Caco-2 (cell line): ENCODE measurements at regions of chr13 and their contacts with region 1.

Region 1: GRCh38 chr13:73754727-73755292 is 379.4 kb downstream of the KLF12 start:
- DNase-seq: peak in 1 of 2 experiments; percentile 73
- H3K4me3 ChIP-seq: no peak overlapping the region
- H3K4me3 Mint-ChIP-seq: no peak overlapping the region
- H3K27ac Mint-ChIP-seq: peak overlapping the region; percentile 15
- H3K4me1 ChIP-seq: no peaks in the 10 kb centered on the region
- H3K4me1 Mint-ChIP-seq: no peaks in the 10 kb centered on the region
- H3K27me3 ChIP-seq: no peaks in the 10 kb centered on the region
- H3K27me3 Mint-ChIP-seq: no peaks in the 10 kb centered on the region
- CTCF ChIP-seq: peak; percentile 59 to 84

Region 2: GRCh38 chr13:73677048-73677601 is 77.7 kb before region 1 on chr13:
- CTCF ChIA-PET with region 1: no interaction called
- POLR2A ChIA-PET with region 1: no interaction called
- intact Hi-C with region 1: no loop called
- DNase-seq: peak in 1 of 2 experiments; percentile 77
- H3K4me3 ChIP-seq: no peak overlapping the region
- H3K4me3 Mint-ChIP-seq: no peak overlapping the region
- H3K27ac Mint-ChIP-seq: peak overlapping the region; percentile 69
- H3K4me1 ChIP-seq: peaks cover 53% of the 10 kb centered on the region
- H3K4me1 Mint-ChIP-seq: peaks cover 23% of the 10 kb centered on the region
- H3K27me3 ChIP-seq: no peaks in the 10 kb centered on the region
- H3K27me3 Mint-ChIP-seq: no peaks in the 10 kb centered on the region
- CTCF ChIP-seq: no peak

Region 3: DNA sequence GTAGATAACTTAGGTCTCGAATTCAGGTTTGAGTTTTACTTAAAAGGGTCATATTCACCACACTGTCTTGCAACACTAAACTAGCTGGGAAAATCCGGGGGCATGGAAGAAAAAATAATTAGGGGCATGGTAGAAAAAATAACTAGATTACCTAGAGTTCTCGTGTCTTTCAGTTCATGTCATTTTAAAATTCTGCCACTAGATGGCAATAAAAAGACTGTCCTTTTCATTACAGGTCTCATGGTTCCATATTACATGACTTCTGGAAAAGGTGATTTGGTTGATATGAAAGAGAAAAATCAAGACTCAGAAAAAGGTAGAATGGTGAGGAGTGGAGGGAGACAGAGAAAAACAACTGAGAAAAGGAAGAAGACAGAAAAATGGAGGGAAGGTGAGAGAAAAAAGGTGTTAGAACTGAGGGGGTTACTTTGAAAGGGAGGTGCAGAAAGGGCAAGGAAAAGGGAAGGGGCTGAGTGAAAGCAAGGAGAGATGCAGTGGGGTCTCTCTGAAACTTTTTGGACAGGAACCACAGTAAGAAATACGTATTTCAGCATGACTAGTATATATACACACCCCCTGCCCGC is 80.4 kb after region 1 on chr13:
- CTCF ChIA-PET with region 1: no interaction called
- POLR2A ChIA-PET with region 1: no interaction called
- intact Hi-C with region 1: loop called (anchors 1 kb)
- DNase-seq: peak in 1 of 2 experiments; percentile 37
- H3K4me3 ChIP-seq: no peak overlapping the region
- H3K4me3 Mint-ChIP-seq: no peak overlapping the region
- H3K27ac Mint-ChIP-seq: no peak overlapping the region
- H3K4me1 ChIP-seq: peaks cover 10% of the 10 kb centered on the region; the same call in 1 of the 2 replicates
- H3K4me1 Mint-ChIP-seq: peaks cover 7% of the 10 kb centered on the region
- H3K27me3 ChIP-seq: no peaks in the 10 kb centered on the region
- H3K27me3 Mint-ChIP-seq: no peaks in the 10 kb centered on the region
- CTCF ChIP-seq: peak in 1 of 2 experiments; percentile 42

Region 4: GRCh38 chr13:73924607-73925006 is 169.8 kb after region 1 on chr13:
- CTCF ChIA-PET with region 1: no interaction called
- POLR2A ChIA-PET with region 1: no interaction called
- intact Hi-C with region 1: loop called (anchors 5 kb)
- DNase-seq: no peak
- H3K4me3 ChIP-seq: no peak overlapping the region
- H3K4me3 Mint-ChIP-seq: no peak overlapping the region
- H3K27ac Mint-ChIP-seq: no peak overlapping the region
- H3K4me1 ChIP-seq: peaks cover 5% of the 10 kb centered on the region; the same call in 1 of the 2 replicates
- H3K4me1 Mint-ChIP-seq: peaks cover 18% of the 10 kb centered on the region
- H3K27me3 ChIP-seq: no peaks in the 10 kb centered on the region
- H3K27me3 Mint-ChIP-seq: no peaks in the 10 kb centered on the region
- CTCF ChIP-seq: no peak

Region 5: DNA sequence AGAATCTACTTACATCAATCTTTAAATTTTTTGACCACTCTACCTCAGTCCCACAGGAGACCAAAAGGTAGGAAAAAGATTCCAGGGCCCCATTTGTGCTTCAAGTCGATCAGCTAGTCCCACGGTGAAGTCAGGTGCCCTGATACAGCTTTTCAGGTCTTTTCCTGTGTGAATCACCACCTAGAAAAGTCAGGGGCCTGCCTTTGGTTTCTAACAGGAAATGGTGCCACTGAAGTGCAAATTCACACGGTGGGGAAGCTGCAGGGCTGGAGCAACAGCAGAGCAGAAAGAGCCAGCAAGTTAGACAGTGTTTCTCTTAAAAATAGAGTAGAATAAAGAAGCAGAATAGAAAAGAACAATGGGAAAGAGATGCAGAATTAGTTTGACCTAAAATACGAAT is 271.9 kb after region 1 on chr13:
- CTCF ChIA-PET with region 1: no interaction called
- POLR2A ChIA-PET with region 1: no interaction called
- intact Hi-C with region 1: loop called (anchors 10 kb)
- DNase-seq: no peak
- H3K4me3 ChIP-seq: no peak overlapping the region
- H3K4me3 Mint-ChIP-seq: no peak overlapping the region
- H3K27ac Mint-ChIP-seq: peak overlapping the region; percentile 75
- H3K4me1 ChIP-seq: peaks cover 80% of the 10 kb centered on the region
- H3K4me1 Mint-ChIP-seq: peaks cover 72% of the 10 kb centered on the region
- H3K27me3 ChIP-seq: no peaks in the 10 kb centered on the region
- H3K27me3 Mint-ChIP-seq: no peaks in the 10 kb centered on the region
- CTCF ChIP-seq: no peak

Region 6: GRCh38 chr13:74133657-74134201 is 378.9 kb after region 1 on chr13:
- CTCF ChIA-PET with region 1: no interaction called
- POLR2A ChIA-PET with region 1: no interaction called
- intact Hi-C with region 1: loop called (anchors 10 kb)
- DNase-seq: peak; percentile 71 to 74
- H3K4me3 ChIP-seq: peak overlapping the region; percentile 94
- H3K4me3 Mint-ChIP-seq: no peak overlapping the region
- H3K27ac Mint-ChIP-seq: peak overlapping the region; percentile 67
- H3K4me1 ChIP-seq: peaks cover under 1% of the 10 kb centered on the region
- H3K4me1 Mint-ChIP-seq: peaks cover 8% of the 10 kb centered on the region
- H3K27me3 ChIP-seq: no peaks in the 10 kb centered on the region
- H3K27me3 Mint-ChIP-seq: no peaks in the 10 kb centered on the region
- CTCF ChIP-seq: no peak

Region 7: GRCh38 chr13:75219479-75220237 is 1464.8 kb after region 1 on chr13:
- CTCF ChIA-PET with region 1: interaction called, 4 read pairs
- POLR2A ChIA-PET with region 1: no interaction called
- intact Hi-C with region 1: loop called (anchors 1 kb)
- DNase-seq: peak; percentile 73 to 90
- H3K4me3 ChIP-seq: no peak overlapping the region
- H3K4me3 Mint-ChIP-seq: peak overlapping the region; percentile 23
- H3K27ac Mint-ChIP-seq: no peak overlapping the region
- H3K4me1 ChIP-seq: no peaks in the 10 kb centered on the region; the same call in 1 of the 2 replicates
- H3K4me1 Mint-ChIP-seq: no peaks in the 10 kb centered on the region
- H3K27me3 ChIP-seq: no peaks in the 10 kb centered on the region
- H3K27me3 Mint-ChIP-seq: peaks cover 16% of the 10 kb centered on the region
- CTCF ChIP-seq: peak; percentile 90 to 98

Region 8: GRCh38 chr13:75258159-75258782 is 1503.5 kb after region 1 on chr13:
- CTCF ChIA-PET with region 1: no interaction called
- POLR2A ChIA-PET with region 1: no interaction called
- intact Hi-C with region 1: loop called (anchors 10 kb)
- DNase-seq: peak in 1 of 2 experiments; percentile 43
- H3K4me3 ChIP-seq: no peak overlapping the region
- H3K4me3 Mint-ChIP-seq: no peak overlapping the region
- H3K27ac Mint-ChIP-seq: no peak overlapping the region
- H3K4me1 ChIP-seq: peaks cover 22% of the 10 kb centered on the region; the same call in 1 of the 2 replicates
- H3K4me1 Mint-ChIP-seq: peaks cover 24% of the 10 kb centered on the region
- H3K27me3 ChIP-seq: no peaks in the 10 kb centered on the region
- H3K27me3 Mint-ChIP-seq: no peaks in the 10 kb centered on the region
- CTCF ChIP-seq: peak; percentile 73 to 75